Activated B cell treated with CpG ODN at 0.5 μM for 24 hours (primary cell): ENCODE measurements at regions of chr11 and their contacts with region 1.

Region 1: DNA sequence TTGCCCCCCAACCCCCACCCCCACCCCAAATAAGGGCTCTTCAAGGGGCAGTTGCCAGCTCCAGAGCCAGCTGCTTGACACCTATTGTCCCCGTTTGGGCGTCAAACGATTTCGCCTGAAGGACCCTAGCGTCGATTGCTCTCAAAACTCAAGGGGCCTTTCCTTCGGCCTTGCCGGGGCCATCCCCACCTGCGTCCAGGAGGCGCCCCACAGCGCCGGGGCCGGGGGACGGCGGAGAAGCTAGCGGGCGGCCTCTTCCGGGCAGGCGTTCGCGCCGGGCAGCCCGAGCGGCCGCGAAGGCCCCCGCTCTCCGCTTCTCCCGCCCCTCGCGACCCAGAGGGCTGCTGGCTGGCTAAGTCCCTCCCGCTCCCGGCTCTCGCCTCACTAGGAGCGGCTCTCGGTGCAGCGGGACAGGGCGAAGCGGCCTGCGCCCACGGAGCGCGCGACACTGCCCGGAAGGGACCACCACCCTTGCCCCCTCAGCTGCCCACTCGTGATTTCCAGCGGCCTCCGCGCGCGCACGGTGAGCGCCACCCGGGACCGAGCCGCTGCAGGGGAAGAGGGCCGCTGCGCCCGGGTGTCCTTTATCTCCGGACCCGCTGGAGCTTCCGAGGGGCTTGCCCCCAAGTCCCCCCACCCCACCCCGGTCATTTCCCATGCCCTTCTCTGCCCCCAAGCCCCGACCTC is at the start of gene CAPRIN1:
- DNase-seq: peak; percentile 87
- ATAC-seq: peak; percentile 73
- H3K4me3 Mint-ChIP-seq: peak within 1 kb of the TSS; percentile 99
- H3K27ac Mint-ChIP-seq: peak within 1 kb of the TSS; percentile 98
- H3K4me1 Mint-ChIP-seq: peaks cover 37% of the 10 kb centered on the region
- H3K27me3 Mint-ChIP-seq: no peaks in the 10 kb centered on the region
- CTCF ChIP-seq: no peak
- total RNA-seq, gene CAPRIN1: 152 and 158 TPM in 2 replicates

Region 2: DNA sequence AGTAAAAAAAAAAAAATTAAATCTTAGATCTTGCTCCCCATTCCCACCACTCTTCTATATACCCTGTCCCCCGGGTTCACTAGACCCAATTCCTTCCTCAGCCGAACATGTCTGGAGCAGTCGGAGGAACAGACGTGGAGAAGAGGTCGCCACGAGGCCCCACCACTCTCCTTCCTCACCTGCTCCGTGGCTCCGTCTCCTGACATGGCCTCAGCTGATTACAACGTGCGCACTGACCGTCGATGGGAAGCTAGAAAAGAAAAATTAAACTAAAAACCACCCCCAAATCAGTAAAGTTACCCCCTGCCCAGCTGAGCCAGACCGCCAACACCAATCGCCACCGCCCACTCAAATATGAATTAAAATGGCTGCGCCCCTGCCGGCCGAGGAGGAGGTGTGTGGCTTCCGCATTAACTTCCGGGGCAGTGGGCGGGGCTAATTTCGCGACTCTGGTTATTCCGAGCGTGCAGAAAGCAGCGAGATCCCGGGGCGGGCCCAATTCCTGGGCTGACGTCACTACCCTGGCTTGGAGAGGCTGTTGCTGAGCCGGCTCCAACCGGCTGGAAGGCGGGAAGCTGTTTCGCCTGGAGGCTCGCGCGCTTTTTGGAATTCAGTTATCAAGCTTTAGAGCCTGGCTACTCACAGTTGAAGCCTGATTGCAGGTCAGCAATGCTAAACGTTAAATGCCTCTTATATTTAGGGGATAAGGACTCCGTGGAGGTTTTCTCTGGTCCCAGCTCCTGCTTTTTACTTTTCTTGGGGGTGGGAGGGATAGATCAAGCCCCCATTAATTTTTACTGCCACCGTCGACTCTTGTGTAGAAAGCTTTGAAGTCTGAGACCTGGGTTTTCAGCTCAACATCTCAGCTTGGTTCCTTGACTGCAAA is 890.1 kb before region 1 on chr11 and contains the start of gene CSTF3:
- CTCF ChIA-PET with region 1: no interaction called
- POLR2A ChIA-PET with region 1: no interaction called
- intact Hi-C with region 1: loop called (anchors 2 kb)
- DNase-seq: peak; percentile 92
- ATAC-seq: peak; percentile 96
- H3K4me3 Mint-ChIP-seq: peak within 1 kb of the TSS; percentile 99
- H3K27ac Mint-ChIP-seq: peak within 1 kb of the TSS; percentile 95
- H3K4me1 Mint-ChIP-seq: peaks cover 44% of the 10 kb centered on the region
- H3K27me3 Mint-ChIP-seq: no peaks in the 10 kb centered on the region
- CTCF ChIP-seq: no peak
- total RNA-seq, gene CSTF3: 30.0 and 33.5 TPM in 2 replicates

Region 3: DNA sequence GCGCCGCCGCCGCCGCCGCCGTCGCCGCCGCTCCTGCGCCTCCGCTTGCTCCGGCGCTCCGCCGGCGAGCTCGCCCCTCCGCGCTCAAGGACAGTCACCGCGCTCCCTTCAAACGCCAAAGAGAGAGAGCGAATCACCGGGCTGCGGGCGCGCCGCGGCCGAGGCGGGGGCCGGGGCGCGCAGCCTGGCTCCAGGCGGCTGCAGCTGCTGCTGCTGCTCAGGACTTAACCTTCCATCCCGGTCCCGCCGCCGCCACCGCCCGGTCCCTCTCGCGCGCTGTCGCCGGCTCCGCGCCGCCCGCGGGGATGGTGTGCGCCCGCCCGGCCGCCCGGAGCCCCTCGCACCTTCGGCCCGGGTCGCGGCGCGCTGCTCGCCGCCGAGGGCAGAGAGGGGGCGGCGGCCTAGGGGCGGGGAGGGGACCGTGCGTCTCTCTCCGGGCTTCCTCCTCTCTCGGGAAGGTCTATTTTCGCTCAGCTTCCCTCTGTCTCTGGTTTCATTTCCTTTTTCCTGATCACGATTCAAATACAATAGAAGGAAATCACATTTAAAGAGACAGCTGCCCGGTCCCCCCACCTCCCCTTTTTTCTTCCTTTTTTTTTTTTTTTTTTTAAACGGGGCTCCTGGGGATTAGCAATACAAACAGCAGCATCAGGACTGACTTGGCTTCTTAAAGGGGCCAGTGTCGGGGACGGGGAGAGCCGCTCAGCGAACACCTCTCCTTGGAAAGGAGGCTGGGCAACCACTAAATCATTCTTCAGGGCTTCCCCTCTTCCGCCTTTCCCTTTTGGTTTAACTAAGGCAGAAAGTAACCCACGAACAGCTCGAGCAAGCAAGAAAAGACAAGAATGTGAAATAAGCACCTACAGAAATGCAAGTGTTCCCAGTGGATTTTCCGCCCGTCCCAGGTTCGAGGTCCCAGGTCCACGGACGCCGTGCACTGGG is 181.7 kb before region 1 on chr11:
- CTCF ChIA-PET with region 1: no interaction called
- POLR2A ChIA-PET with region 1: no interaction called
- intact Hi-C with region 1: loop called (anchors 2 kb)
- DNase-seq: peak; percentile 57
- ATAC-seq: peak; percentile 72
- H3K4me3 Mint-ChIP-seq: peak overlapping the region; percentile 92
- H3K27ac Mint-ChIP-seq: peak overlapping the region; percentile 74
- H3K4me1 Mint-ChIP-seq: peaks cover 36% of the 10 kb centered on the region
- H3K27me3 Mint-ChIP-seq: no peaks in the 10 kb centered on the region
- CTCF ChIP-seq: no peak

Region 4: DNA sequence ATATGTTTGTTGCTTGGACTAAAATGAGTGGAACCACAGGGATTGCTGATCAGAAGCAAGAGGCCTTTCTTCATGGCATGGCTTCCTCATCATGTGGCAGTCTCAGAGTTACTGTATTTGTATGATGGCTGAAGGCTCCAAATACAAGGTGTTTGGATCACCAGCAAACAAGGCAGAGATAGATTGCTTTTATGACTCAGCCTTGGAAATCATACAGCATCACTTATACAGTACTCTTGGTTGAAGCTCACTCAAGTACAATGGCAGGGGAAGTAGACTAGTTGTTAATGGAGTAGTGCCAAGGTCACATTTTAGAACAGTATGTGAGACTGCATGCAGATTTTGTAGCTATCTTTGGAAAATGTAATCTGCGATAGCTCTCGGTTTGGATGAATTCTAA is 16.6 kb after region 1 on chr11:
- CTCF ChIA-PET with region 1: interaction called, 3 read pairs
- POLR2A ChIA-PET with region 1: interaction called, 8 read pairs
- intact Hi-C with region 1: loop called (anchors 1 kb)
- DNase-seq: no peak
- ATAC-seq: peak; percentile 47
- H3K4me3 Mint-ChIP-seq: no peak overlapping the region
- H3K27ac Mint-ChIP-seq: peak overlapping the region; percentile 70
- H3K4me1 Mint-ChIP-seq: peaks cover 46% of the 10 kb centered on the region
- H3K27me3 Mint-ChIP-seq: no peaks in the 10 kb centered on the region
- CTCF ChIP-seq: no peak

Region 5: GRCh38 chr11:34250732-34251639 is 199.5 kb after region 1 on chr11:
- CTCF ChIA-PET with region 1: no interaction called
- POLR2A ChIA-PET with region 1: interaction called, 3 read pairs
- intact Hi-C with region 1: loop called (anchors 5 kb)
- DNase-seq: peak; percentile 63
- ATAC-seq: peak; percentile 98
- H3K4me3 Mint-ChIP-seq: peak overlapping the region; percentile 55
- H3K27ac Mint-ChIP-seq: peak overlapping the region; percentile 71
- H3K4me1 Mint-ChIP-seq: peaks cover 55% of the 10 kb centered on the region
- H3K27me3 Mint-ChIP-seq: no peaks in the 10 kb centered on the region
- CTCF ChIP-seq: no peak